ENCODE measurements at regions of chr16 and their contacts with region 1.

Region 1: DNA sequence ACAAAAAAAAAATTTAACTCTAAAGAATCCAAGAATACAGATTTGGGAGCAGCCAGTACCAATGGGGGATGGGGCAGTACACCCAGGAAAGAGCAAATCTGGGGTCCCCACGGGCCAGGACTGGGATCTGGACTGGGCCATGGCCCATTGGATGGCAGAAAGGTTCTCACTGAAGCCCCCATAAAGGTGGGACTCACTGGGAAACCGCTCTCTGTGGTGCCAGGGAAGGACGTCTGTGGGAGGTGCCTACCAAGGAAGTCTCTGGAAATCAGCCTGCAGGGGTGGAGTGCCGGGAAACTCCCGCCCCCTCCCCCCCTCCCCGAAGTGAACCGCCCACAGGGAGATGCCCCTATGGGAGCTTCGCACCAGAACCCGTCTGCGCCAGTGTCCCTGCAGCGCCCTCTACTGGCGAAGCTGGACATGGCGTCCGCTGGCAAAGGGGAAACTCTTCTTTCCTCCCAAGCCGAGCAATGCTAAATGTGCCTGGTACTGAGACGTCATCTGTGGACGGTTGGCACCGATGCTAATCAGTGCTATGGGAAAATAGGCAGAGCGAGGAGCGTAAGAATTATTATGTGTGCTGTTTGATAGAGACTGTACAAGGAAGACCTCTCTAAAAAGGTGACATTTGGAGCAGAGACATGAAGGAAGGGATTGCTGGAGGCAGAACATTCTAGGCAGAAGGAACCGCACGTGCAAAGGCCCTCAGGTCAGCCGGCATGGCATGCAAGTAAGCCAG is 671.1 kb downstream of the WWOX start:
- DNase-seq: peak; percentile 93
- H3K4me3 Mint-ChIP-seq: peak overlapping the region; percentile 65
- H3K27ac Mint-ChIP-seq: peak overlapping the region; percentile 87
- H3K4me1 Mint-ChIP-seq: peaks cover 80% of the 10 kb centered on the region
- H3K27me3 Mint-ChIP-seq: no peaks in the 10 kb centered on the region

Region 2: GRCh38 chr16:78099372-78100161 is 671.0 kb before region 1 on chr16 and contains the start of gene WWOX:
- CTCF ChIA-PET with region 1: no interaction called
- POLR2A ChIA-PET with region 1: no interaction called
- intact Hi-C with region 1: loop called (anchors 2 kb)
- DNase-seq: peak; percentile 97
- H3K4me3 Mint-ChIP-seq: peak within 1 kb of the TSS; percentile 86
- H3K27ac Mint-ChIP-seq: peak within 1 kb of the TSS; percentile 91
- H3K4me1 Mint-ChIP-seq: peaks cover 38% of the 10 kb centered on the region
- H3K27me3 Mint-ChIP-seq: peaks cover 5% of the 10 kb centered on the region
- total RNA-seq, gene WWOX: 14.3 to 16.5 TPM

Region 3: GRCh38 chr16:78570399-78571141 is 200.0 kb before region 1 on chr16:
- CTCF ChIA-PET with region 1: no interaction called
- POLR2A ChIA-PET with region 1: no interaction called
- intact Hi-C with region 1: loop called (anchors 10 kb)
- DNase-seq: peak; percentile 15
- H3K4me3 Mint-ChIP-seq: no peak overlapping the region
- H3K27ac Mint-ChIP-seq: no peak overlapping the region
- H3K4me1 Mint-ChIP-seq: peaks cover 18% of the 10 kb centered on the region
- H3K27me3 Mint-ChIP-seq: no peaks in the 10 kb centered on the region

Region 4: DNA sequence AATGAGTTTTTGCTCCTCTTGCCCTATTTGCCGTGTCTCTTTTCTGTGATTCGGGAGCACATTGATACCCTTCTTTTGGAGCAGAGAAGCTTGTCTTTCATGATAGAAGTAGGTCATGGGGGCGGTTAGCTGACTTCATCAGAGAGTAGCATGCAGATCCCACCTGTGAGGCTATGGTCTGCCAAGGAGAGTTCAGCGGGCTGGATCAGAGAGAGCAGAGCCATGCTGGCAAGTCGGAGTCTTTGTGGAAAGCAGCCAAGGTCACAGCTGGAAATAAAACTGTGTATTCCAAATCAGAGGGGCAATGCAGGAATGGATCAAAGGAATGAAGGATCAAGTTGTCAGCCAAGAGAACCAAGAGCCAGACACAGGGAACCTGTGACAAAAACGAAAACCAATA is 75.1 kb before region 1 on chr16:
- CTCF ChIA-PET with region 1: no interaction called
- POLR2A ChIA-PET with region 1: no interaction called
- intact Hi-C with region 1: no loop called
- DNase-seq: no peak
- H3K4me3 Mint-ChIP-seq: no peak overlapping the region
- H3K27ac Mint-ChIP-seq: no peak overlapping the region
- H3K4me1 Mint-ChIP-seq: no peaks in the 10 kb centered on the region
- H3K27me3 Mint-ChIP-seq: no peaks in the 10 kb centered on the region

Region 5: DNA sequence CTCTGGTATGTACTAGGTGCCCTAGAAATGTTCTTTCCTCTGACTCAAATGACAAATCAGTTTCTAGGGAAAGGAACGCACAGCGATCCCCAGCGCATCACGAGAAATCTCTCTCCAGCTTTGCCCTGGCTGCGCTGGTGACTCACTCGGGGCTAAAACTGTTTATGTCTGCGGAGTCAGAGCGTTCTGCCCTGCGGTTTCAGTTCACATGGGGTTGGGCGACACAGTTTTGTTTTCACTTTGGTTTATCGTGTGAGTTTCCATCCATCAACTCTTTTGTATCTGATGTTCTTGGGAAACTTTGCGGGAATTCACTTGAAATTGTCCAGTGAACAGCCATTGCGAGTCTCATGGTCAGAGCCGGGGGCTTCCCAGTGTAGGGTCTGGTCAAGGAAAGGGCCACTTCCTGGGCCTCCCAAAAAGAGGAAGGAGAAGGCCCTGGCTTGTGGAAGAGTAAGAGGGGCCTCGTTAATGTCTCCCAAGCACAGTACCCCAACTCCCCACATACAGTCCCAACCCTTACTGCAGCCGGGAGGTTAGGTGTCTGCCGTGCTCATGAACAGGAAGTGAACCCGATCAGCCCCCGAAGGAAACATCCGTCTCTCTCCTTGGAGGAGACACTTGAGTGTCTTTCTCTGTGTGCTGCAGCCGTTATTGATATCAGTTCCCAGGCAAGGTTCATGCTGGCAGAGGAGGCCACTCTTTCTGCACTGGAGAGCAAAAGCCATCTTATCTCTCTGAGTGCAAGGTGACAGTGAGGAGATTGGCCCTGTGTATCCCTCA is 27.8 kb before region 1 on chr16:
- CTCF ChIA-PET with region 1: interaction called, 8 read pairs
- POLR2A ChIA-PET with region 1: interaction called, 3 read pairs
- intact Hi-C with region 1: loop called (anchors 1 kb)
- DNase-seq: peak; percentile 94
- H3K4me3 Mint-ChIP-seq: peak overlapping the region; percentile 73
- H3K27ac Mint-ChIP-seq: peak overlapping the region; percentile 95
- H3K4me1 Mint-ChIP-seq: peaks cover 40% of the 10 kb centered on the region
- H3K27me3 Mint-ChIP-seq: no peaks in the 10 kb centered on the region

Region 6: GRCh38 chr16:78900044-78900811 is 129.7 kb after region 1 on chr16:
- CTCF ChIA-PET with region 1: interaction called, 12 read pairs
- POLR2A ChIA-PET with region 1: interaction called, 232 read pairs
- intact Hi-C with region 1: loop called (anchors 1 kb)
- DNase-seq: no peak
- H3K4me3 Mint-ChIP-seq: peak overlapping the region; percentile 20
- H3K27ac Mint-ChIP-seq: peak overlapping the region; percentile 96
- H3K4me1 Mint-ChIP-seq: peaks cover 76% of the 10 kb centered on the region
- H3K27me3 Mint-ChIP-seq: no peaks in the 10 kb centered on the region